Dorsolateral prefrontal cortex (tissue), 120 donors: ENCODE measurements at regions of chr3 and their contacts with region 1.

Region 1: GRCh38 chr3:15820911-15821310 is 23.1 kb upstream of the ANKRD28 start:
- DNase-seq: no peak
- H3K4me3 ChIP-seq: no peak overlapping the region
- H3K27ac ChIP-seq: peak overlapping the region in 12 of 59 donors; percentile 2 to 26 (median 10)
- H3K27me3 ChIP-seq: no peaks in the 10 kb centered on the region
- CTCF ChIP-seq: peak in 12 of 56 donors; percentile 5 to 22 (median 16)

Region 2: DNA sequence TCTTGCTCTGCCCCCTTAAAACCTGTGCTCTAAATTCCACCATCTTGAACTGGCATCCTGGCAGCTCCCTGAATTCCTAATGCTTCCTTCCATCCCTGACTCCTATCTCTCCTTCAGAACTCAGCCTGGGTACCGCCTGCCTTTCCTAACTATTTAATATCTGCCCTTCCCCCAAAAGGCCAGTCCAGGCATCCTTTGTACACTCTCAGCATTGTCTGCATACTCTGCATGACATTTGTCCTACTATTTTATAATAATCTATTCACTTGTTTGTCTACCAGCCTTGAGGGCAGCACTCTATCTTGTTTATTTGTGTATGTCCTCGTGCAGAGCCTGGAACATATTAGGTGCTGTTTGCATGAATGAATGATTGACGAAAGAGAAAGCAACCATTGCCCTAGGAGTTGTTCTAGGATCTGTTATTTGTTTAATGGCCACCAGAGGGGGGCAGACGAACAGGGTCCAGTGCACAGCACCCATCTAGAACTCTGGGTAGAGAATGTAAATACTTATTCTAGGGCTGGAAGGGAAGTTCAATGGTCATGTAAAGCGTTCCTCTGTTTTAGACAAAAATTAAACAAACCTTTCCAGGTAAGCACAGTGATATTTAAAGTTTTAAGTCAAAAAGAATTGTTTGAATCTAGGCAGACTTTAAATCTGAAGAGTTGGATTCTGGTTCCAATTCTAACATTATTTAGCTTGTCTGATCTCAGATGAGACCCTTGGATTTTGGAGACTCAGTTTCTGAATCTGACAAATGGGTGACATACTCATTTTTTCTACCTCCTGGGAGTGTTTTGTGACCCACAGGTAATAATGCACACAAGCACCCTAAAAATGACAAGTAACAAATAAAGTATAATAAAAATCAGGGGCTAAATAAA is 227.8 kb after region 1 on chr3:
- intact Hi-C with region 1: loop called in 1 of 2 experiments (anchors 5 kb)
- DNase-seq: peak in 5 of 10 donors; percentile 42 to 66 (median 63)
- H3K4me3 ChIP-seq: peak overlapping the region in 46 of 59 donors; percentile 4 to 55 (median 34)
- H3K27ac ChIP-seq: peak overlapping the region in 18 of 59 donors; percentile 7 to 68 (median 38)
- H3K27me3 ChIP-seq: no peaks in the 10 kb centered on the region
- CTCF ChIP-seq: peak; percentile 75 to 97 (median 90)